GM12878 (cell line): ENCODE measurements at regions of chr3 and their contacts with region 1.

Region 1: GRCh38 chr3:71984843-71985613 is 200.1 kb upstream of the PROK2 start:
- DNase-seq: peak; percentile 97
- ATAC-seq: peak; percentile 89
- H3K4me3 ChIP-seq: peak overlapping the region; percentile 22; the same call in 1 of the 2 replicates
- H3K27ac ChIP-seq: peak overlapping the region; percentile 92
- H3K4me1 ChIP-seq: peaks cover 64% of the 10 kb centered on the region
- H3K27me3 ChIP-seq: no peaks in the 10 kb centered on the region
- CTCF ChIP-seq: no peak
- EP300 ChIP-seq: peak; percentile 90 to 95
- POLR2A ChIP-seq: no peak
- RAD21 ChIP-seq: peak; percentile 25; the same call in 1 of the 2 replicates

Region 2: GRCh38 chr3:71825551-71826283 is 159.3 kb before region 1 on chr3:
- CTCF ChIA-PET with region 1: no interaction called
- POLR2A ChIA-PET with region 1: no interaction called
- RAD21 ChIA-PET with region 1: no interaction called
- SMC1A ChIA-PET with region 1: no interaction called
- in situ Hi-C with region 1: no loop called
- intact Hi-C with region 1: no loop called
- DNase-seq: no peak
- ATAC-seq: no peak; the same call in 2 of the 3 replicates
- H3K4me3 ChIP-seq: no peak overlapping the region
- H3K27ac ChIP-seq: no peak overlapping the region
- H3K4me1 ChIP-seq: no peaks in the 10 kb centered on the region
- H3K27me3 ChIP-seq: no peaks in the 10 kb centered on the region
- CTCF ChIP-seq: no peak
- EP300 ChIP-seq: no peak
- POLR2A ChIP-seq: no peak
- RAD21 ChIP-seq: no peak

Region 3: DNA sequence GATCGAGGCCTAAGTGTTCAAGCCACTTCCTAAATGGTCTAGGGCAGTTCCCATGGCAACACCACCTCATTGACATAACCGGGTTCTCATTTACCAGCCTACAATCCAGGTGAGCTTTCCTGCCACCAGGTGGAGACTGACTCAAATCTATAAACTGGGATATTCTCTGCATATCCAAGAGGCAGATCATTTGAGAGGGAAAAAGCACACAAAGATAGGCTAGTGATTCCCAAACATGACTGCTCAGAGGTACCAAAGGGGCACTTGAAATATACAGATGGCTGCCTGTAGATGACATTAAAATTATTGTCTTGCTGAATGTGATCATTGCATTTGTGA is 58.8 kb before region 1 on chr3:
- CTCF ChIA-PET with region 1: interaction called, 9 read pairs
- POLR2A ChIA-PET with region 1: no interaction called
- RAD21 ChIA-PET with region 1: interaction called, 3 read pairs
- SMC1A ChIA-PET with region 1: interaction called, 11 read pairs
- in situ Hi-C with region 1: no loop called
- intact Hi-C with region 1: no loop called
- DNase-seq: no peak
- ATAC-seq: peak; percentile 71
- H3K4me3 ChIP-seq: no peak overlapping the region
- H3K27ac ChIP-seq: no peak overlapping the region
- H3K4me1 ChIP-seq: peaks cover 4% of the 10 kb centered on the region; the same call in 1 of the 2 replicates
- H3K27me3 ChIP-seq: no peaks in the 10 kb centered on the region
- CTCF ChIP-seq: peak; percentile 36 to 53 (median 51); a peak in 5 of 6 replicates
- EP300 ChIP-seq: no peak
- POLR2A ChIP-seq: no peak
- RAD21 ChIP-seq: peak; percentile 72

Region 4: DNA sequence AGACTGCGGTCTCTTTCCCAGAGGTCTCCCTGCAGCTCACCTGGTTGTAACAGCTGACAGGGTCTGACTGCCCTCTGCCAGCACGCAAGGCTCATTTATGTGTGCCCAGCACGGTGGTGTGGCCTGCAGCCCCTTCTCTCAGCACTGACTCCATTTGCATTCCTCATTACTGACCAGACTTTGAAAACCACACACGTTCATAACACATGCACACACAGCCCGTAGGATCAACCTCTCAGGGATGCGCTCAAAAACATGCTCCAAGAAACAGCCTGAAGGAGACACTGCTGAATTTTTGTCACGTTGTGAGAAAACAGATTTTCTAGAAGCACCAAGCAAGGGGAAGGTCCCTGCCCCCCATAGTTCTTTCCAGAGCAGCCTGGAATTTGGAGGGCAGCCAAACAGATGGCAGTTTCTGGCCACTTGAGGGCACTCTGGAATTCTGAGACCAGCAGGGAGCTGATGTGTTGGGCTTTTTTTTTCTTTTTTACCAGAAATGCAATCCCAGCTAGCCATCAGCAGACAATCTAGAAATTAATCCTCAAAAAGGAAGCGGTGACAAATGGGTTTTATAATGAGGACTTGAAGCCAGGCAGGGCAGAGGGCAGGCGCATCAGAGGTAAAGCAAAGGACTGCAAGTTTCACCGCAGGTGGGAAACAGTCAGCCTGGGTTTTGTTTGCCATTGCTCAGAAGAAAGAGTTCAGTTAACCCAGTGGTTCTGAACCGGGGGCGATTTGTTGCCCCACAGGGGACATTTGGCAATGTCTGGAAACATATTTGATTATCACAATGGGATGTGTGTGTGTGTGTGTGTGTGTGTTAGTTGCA is 29.6 kb before region 1 on chr3:
- CTCF ChIA-PET with region 1: interaction called, 9 read pairs
- POLR2A ChIA-PET with region 1: no interaction called
- RAD21 ChIA-PET with region 1: interaction called, 21 read pairs
- SMC1A ChIA-PET with region 1: interaction called, 32 read pairs
- in situ Hi-C with region 1: no loop called
- intact Hi-C with region 1: no loop called
- DNase-seq: peak; percentile 61
- ATAC-seq: peak; percentile 81
- H3K4me3 ChIP-seq: no peak overlapping the region
- H3K27ac ChIP-seq: no peak overlapping the region
- H3K4me1 ChIP-seq: peaks cover 22% of the 10 kb centered on the region
- H3K27me3 ChIP-seq: no peaks in the 10 kb centered on the region
- CTCF ChIP-seq: peak; percentile 46 to 81 (median 67); a peak in 5 of 6 replicates
- EP300 ChIP-seq: no peak
- POLR2A ChIP-seq: no peak
- RAD21 ChIP-seq: peak; percentile 85

Region 5: DNA sequence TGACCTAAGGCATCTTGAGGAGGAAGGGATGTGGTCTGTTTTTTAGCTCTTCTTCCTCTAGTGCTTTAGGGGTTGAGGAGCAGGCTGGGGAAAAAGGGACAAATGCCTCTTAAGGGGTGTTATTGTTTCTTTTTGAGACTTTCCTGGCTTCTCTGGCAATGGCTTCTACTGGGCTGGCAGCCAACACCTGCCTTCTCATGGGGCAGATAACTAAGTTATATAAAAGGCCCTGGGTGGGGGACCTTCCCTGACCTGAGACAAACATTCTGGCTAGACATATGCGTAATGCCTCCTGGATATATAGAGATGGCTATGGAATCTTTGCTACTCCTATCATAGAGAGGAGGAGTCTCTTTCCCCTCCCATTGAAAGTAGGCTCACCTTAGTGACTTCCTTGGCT is 20.9 kb before region 1 on chr3:
- CTCF ChIA-PET with region 1: no interaction called
- POLR2A ChIA-PET with region 1: interaction called, 3 read pairs
- RAD21 ChIA-PET with region 1: interaction called, 5 read pairs
- SMC1A ChIA-PET with region 1: interaction called, 32 read pairs
- in situ Hi-C with region 1: no loop called
- intact Hi-C with region 1: no loop called
- DNase-seq: no peak
- ATAC-seq: no peak
- H3K4me3 ChIP-seq: no peak overlapping the region
- H3K27ac ChIP-seq: no peak overlapping the region
- H3K4me1 ChIP-seq: 0 out of 2 replicates have a peak, but pooled peaks cover 4% of the 10 kb centered on the region
- H3K27me3 ChIP-seq: no peaks in the 10 kb centered on the region
- CTCF ChIP-seq: no peak
- EP300 ChIP-seq: no peak
- POLR2A ChIP-seq: no peak
- RAD21 ChIP-seq: no peak

Region 6: DNA sequence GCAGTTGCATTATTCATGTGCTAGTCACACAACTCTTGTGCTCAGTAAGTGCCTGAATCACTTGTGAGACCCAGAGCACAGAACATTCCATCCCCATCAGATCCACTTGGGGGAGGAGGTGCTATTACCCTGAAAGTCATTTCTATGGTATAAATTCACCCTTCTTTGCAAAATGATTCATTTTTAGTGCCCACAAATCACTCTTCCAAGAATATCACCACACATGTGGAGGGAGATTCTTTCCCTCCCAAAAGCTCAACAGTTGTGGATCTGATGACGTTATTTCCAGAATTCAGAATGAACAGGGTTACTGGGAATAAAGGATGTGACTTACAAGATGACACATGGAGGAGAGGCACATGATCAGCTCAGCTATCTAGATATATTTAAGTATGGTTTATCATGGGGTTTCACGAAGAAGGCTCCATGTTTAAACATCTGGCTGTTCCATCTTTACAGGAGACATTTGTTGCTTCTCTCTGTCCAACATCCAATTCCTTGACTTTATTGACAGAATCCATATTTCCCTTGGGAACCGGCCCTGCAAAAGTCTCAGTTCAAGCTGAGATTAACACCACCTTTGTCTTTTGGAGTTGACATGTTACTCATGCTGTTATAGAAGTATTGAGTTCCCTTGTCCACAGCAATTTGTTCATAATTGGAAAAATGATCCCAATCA is 14.1 kb after region 1 on chr3:
- CTCF ChIA-PET with region 1: interaction called, 6 read pairs
- POLR2A ChIA-PET with region 1: interaction called, 4 read pairs
- RAD21 ChIA-PET with region 1: no interaction called
- SMC1A ChIA-PET with region 1: interaction called, 10 read pairs
- in situ Hi-C with region 1: no loop called
- intact Hi-C with region 1: no loop called
- DNase-seq: no peak
- ATAC-seq: no peak
- H3K4me3 ChIP-seq: no peak overlapping the region
- H3K27ac ChIP-seq: no peak overlapping the region
- H3K4me1 ChIP-seq: no peaks in the 10 kb centered on the region
- H3K27me3 ChIP-seq: no peaks in the 10 kb centered on the region
- CTCF ChIP-seq: no peak
- EP300 ChIP-seq: no peak
- POLR2A ChIP-seq: no peak
- RAD21 ChIP-seq: no peak

Region 7: DNA sequence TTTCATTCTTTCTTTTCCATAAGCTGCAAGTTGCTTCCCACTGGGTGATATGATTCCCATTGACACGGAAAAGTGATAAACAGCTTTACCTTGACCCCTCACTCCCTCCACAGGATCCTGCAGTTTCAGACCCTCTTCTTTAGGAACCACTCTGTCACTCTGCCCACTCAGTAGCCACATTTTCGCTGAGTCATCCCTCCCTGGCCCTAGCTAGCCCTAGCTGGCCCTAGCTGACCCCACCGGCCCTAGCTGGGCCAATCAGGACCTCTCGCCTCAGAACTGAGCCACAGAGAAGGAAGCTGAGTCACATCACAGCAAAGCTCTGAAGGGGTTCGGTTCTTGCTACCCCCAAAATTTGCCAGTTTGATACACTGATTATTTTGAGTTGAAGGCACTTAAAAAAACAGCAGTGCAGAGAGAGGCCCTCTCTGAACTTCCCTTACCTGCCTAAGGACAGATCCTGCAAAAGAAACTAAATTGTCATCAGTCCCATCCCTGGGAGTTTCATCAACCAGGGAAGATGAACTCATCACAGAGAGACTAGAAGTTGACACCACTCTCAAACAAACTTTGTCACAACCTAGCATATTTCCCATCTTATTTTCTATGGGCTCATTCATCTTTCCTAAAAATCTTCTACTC is 33.4 kb after region 1 on chr3:
- CTCF ChIA-PET with region 1: interaction called, 3 read pairs
- POLR2A ChIA-PET with region 1: interaction called, 8 read pairs
- RAD21 ChIA-PET with region 1: interaction called, 5 read pairs
- SMC1A ChIA-PET with region 1: interaction called, 19 read pairs
- in situ Hi-C with region 1: no loop called
- intact Hi-C with region 1: no loop called
- DNase-seq: no peak
- ATAC-seq: no peak
- H3K4me3 ChIP-seq: no peak overlapping the region
- H3K27ac ChIP-seq: no peak overlapping the region
- H3K4me1 ChIP-seq: peaks cover 14% of the 10 kb centered on the region
- H3K27me3 ChIP-seq: no peaks in the 10 kb centered on the region
- CTCF ChIP-seq: no peak
- EP300 ChIP-seq: no peak
- POLR2A ChIP-seq: no peak
- RAD21 ChIP-seq: no peak

Region 8: DNA sequence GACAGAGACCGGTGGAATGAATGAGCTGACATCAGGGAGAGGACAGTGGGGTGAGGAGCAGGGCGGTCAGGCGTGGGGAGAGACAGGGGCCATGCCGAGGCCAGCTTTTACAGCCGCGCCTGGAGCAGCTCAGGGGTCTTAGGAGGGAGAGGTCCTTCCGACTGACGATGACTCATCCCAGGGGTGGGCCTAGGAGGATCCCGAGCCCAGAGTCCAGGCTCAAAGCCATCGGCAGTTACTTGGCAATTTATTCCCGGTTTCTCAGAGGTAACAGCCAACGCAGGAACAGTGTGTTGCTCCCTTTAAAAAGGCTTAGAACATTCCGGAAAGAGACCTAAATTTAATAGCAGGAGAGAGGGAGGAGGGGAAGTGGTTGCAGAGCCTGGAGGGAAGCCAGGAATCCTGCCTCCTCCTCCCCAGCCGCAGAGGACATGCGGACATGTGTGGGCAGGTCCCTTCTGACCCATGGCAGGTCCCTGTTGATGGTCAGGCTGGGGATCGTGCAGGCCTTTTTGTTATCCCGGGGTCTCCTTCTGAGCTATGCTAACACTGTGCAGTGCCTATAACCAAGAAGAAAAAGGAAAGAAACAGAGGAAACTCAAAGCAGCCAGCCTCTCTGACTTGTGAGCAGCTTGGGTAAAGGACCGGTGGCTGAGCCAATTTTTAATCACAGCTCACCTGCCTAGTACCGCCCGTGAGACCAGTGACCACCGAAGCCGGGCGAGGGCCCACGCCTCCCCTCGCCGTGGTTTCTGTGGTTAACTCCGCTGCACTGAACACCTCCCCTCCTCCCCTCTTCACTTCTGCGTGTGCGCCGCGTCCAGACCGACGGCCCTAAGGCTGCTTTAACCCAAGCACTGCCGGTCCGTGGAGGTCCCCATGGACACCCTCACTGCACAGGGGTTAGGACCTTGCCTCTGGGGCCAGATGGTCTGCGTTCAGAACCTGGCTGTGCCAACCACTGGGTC is 192.3 kb after region 1 on chr3:
- CTCF ChIA-PET with region 1: interaction called, 4 read pairs
- POLR2A ChIA-PET with region 1: interaction called, 7 read pairs
- RAD21 ChIA-PET with region 1: interaction called, 3 read pairs
- SMC1A ChIA-PET with region 1: interaction called, 3 read pairs
- in situ Hi-C with region 1: no loop called
- intact Hi-C with region 1: loop called (anchors 2 kb)
- DNase-seq: no peak
- ATAC-seq: peak; percentile 64
- H3K4me3 ChIP-seq: peak overlapping the region; percentile 39
- H3K27ac ChIP-seq: peak overlapping the region; percentile 85
- H3K4me1 ChIP-seq: peaks cover 29% of the 10 kb centered on the region
- H3K27me3 ChIP-seq: no peaks in the 10 kb centered on the region
- CTCF ChIP-seq: no peak
- EP300 ChIP-seq: peak; percentile 21 to 40; a peak in 2 of 4 replicates
- POLR2A ChIP-seq: no peak
- RAD21 ChIP-seq: no peak